ENCODE measurements at regions of chr7 and their contacts with region 1.

Region 1: GRCh38 chr7:22110227-22110839 is 164.6 kb upstream of the CDCA7L start:
- DNase-seq: peak; percentile 61 to 68 (median 63)
- H3K4me3 ChIP-seq: no peak overlapping the region
- H3K4me3 Mint-ChIP-seq: no peak overlapping the region
- H3K27ac ChIP-seq: no peak overlapping the region
- H3K27ac Mint-ChIP-seq: peak overlapping the region in 1 of 7 donors; percentile 63
- H3K4me1 ChIP-seq: no peaks in the 10 kb centered on the region
- H3K4me1 Mint-ChIP-seq: no peaks in the 10 kb centered on the region
- H3K27me3 ChIP-seq: no peaks in the 10 kb centered on the region
- H3K27me3 Mint-ChIP-seq: peaks cover 0 to 4% of the 10 kb centered on the region in 2 donors

Region 2: DNA sequence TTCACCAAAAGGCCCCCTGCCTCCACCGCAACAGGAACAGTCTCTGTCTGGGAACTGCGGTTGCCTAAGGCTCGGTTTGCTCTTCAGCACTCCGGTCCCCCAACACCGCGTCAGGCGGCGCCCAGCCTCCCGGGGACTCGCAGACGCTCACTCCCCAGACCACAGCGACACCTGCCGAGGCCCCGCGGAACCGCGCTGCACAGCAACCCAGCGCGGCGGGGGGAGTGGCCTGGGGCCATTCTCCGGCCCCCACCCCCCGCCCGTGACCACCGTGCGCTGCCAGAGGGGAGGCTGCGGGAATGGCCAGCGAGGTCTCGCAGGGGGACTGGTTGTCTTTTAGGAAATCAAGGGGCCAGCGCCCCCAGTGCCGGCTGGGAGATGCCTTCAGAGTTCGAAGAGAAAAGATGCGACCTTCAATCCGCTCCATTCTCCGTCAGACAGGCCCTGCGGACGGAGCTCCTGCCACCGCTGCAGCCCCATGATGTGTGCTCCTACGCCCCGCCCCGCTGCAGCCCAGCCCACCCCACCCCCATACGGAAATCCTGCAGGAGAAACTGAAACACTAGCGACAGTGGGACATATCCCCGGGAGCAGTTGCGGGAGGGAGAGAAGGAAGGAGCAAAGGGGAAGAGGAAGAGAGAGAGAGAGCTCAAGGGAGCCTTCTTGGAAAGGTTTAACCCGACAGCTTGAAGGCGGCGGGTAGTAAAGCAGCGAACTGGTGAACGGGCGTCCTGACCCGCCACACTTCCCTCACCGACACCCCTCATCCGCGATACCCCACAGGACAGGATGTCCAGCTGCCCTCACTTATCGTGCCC is 27.2 kb before region 1 on chr7:
- CTCF ChIA-PET with region 1: interaction called, 22 read pairs
- POLR2A ChIA-PET with region 1: no interaction called
- intact Hi-C with region 1: no loop called
- DNase-seq: peak; percentile 71 to 84 (median 75)
- H3K4me3 ChIP-seq: peak overlapping the region; percentile 49 to 70
- H3K4me3 Mint-ChIP-seq: peak overlapping the region; percentile 83 to 90 (median 87)
- H3K27ac ChIP-seq: peak overlapping the region; percentile 18
- H3K27ac Mint-ChIP-seq: peak overlapping the region in 5 of 7 donors; percentile 50 to 81 (median 66)
- H3K4me1 ChIP-seq: peaks cover 12% of the 10 kb centered on the region
- H3K4me1 Mint-ChIP-seq: peaks cover 6 to 19% (median 13%) of the 10 kb centered on the region in 4 donors
- H3K27me3 ChIP-seq: no peaks in the 10 kb centered on the region
- H3K27me3 Mint-ChIP-seq: peaks cover 11 to 20% of the 10 kb centered on the region in 2 donors

Region 3: GRCh38 chr7:22121702-22122474 is 11.6 kb after region 1 on chr7:
- CTCF ChIA-PET with region 1: interaction called, 22 read pairs
- POLR2A ChIA-PET with region 1: no interaction called
- intact Hi-C with region 1: no loop called
- DNase-seq: no peak
- H3K4me3 ChIP-seq: no peak overlapping the region
- H3K4me3 Mint-ChIP-seq: peak overlapping the region in 7 of 8 donors; percentile 17 to 81 (median 63)
- H3K27ac ChIP-seq: no peak overlapping the region
- H3K27ac Mint-ChIP-seq: peak overlapping the region in 2 of 7 donors; percentile 47 to 57
- H3K4me1 ChIP-seq: peaks cover 8% of the 10 kb centered on the region
- H3K4me1 Mint-ChIP-seq: peaks cover 8 to 11% (median 9%) of the 10 kb centered on the region in 4 donors
- H3K27me3 ChIP-seq: no peaks in the 10 kb centered on the region
- H3K27me3 Mint-ChIP-seq: peaks cover 12 to 14% of the 10 kb centered on the region in 2 donors

Region 4: GRCh38 chr7:22140578-22140977 is 30.2 kb after region 1 on chr7:
- CTCF ChIA-PET with region 1: interaction called, 12 read pairs
- POLR2A ChIA-PET with region 1: no interaction called
- intact Hi-C with region 1: no loop called
- DNase-seq: no peak
- H3K4me3 ChIP-seq: no peak overlapping the region
- H3K4me3 Mint-ChIP-seq: no peak overlapping the region
- H3K27ac ChIP-seq: no peak overlapping the region
- H3K27ac Mint-ChIP-seq: no peak overlapping the region
- H3K4me1 ChIP-seq: no peaks in the 10 kb centered on the region
- H3K4me1 Mint-ChIP-seq: no peaks in the 10 kb centered on the region
- H3K27me3 ChIP-seq: no peaks in the 10 kb centered on the region
- H3K27me3 Mint-ChIP-seq: peaks cover 4 to 7% of the 10 kb centered on the region in 2 donors

Region 5: GRCh38 chr7:22488643-22489462 is 378.5 kb after region 1 on chr7:
- CTCF ChIA-PET with region 1: interaction called, 35 read pairs
- POLR2A ChIA-PET with region 1: no interaction called
- intact Hi-C with region 1: loop called (anchors 1 kb)
- DNase-seq: peak; percentile 43 to 57 (median 48)
- H3K4me3 ChIP-seq: no peak overlapping the region
- H3K4me3 Mint-ChIP-seq: no peak overlapping the region
- H3K27ac ChIP-seq: no peak overlapping the region
- H3K27ac Mint-ChIP-seq: no peak overlapping the region
- H3K4me1 ChIP-seq: no peaks in the 10 kb centered on the region
- H3K4me1 Mint-ChIP-seq: no peaks in the 10 kb centered on the region
- H3K27me3 ChIP-seq: no peaks in the 10 kb centered on the region
- H3K27me3 Mint-ChIP-seq: peaks cover 3 to 6% of the 10 kb centered on the region in 2 donors